ENCODE measurements at regions of chr14 and their contacts with region 1.

Region 1: DNA sequence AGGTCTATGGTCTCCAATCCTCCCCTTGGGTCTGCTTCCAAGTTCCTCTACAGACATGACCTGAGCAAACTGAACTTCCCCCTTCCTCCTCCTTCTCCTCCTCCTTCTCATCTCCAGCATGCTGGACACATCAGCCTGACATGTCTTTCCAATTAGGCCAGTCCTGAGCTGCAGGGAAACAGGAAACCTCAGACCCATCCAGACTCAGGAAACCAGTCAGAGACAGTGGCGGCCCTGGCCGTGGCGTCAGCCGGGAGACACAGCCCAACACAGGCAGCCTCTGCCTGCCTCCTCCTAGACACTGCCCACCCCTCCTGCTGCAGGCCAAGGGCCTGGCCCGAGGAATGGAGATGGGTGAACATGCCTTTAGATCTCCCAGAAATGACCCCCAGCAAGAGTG is 468.8 kb downstream of the BCL11B start:
- DNase-seq: no peak
- H3K4me3 ChIP-seq: no peak overlapping the region
- H3K27ac ChIP-seq: no peak overlapping the region
- H3K4me1 ChIP-seq: no peaks in the 10 kb centered on the region
- H3K27me3 ChIP-seq: no peaks in the 10 kb centered on the region
- CTCF ChIP-seq: no peak

Region 2: DNA sequence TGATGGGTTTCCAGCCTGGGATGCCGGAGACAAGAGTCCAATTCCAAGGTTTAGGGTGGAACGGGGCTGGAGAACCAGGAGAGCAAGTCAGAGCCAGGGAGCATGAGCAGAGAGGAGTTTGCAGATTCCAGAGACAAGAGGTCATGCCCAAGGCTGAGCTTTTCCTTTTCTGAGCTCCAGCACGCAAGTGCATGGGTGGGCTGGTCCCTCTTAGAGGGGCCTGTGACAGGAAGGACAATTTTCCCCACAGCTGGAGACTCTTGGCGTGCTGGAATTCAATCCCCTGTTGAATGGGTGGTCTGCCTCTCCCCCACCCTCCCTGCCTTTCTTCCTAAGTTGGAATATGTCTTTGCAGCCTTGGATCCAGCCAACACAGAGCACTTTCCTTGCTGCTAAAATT is 36.9 kb after region 1 on chr14:
- CTCF ChIA-PET with region 1: no interaction called
- dilution Hi-C with region 1: no loop called
- in situ Hi-C with region 1: no loop called
- intact Hi-C with region 1: no loop called
- DNase-seq: no peak
- H3K4me3 ChIP-seq: no peak overlapping the region
- H3K27ac ChIP-seq: no peak overlapping the region
- H3K4me1 ChIP-seq: no peaks in the 10 kb centered on the region
- H3K27me3 ChIP-seq: no peaks in the 10 kb centered on the region
- CTCF ChIP-seq: no peak

Region 3: GRCh38 chr14:98853063-98853729 is 50.0 kb after region 1 on chr14:
- CTCF ChIA-PET with region 1: no interaction called
- dilution Hi-C with region 1: loop called (anchors 5 kb)
- in situ Hi-C with region 1: no loop called
- intact Hi-C with region 1: no loop called
- DNase-seq: no peak
- H3K4me3 ChIP-seq: no peak overlapping the region
- H3K27ac ChIP-seq: no peak overlapping the region
- H3K4me1 ChIP-seq: no peaks in the 10 kb centered on the region
- H3K27me3 ChIP-seq: no peaks in the 10 kb centered on the region
- CTCF ChIP-seq: no peak

Region 4: DNA sequence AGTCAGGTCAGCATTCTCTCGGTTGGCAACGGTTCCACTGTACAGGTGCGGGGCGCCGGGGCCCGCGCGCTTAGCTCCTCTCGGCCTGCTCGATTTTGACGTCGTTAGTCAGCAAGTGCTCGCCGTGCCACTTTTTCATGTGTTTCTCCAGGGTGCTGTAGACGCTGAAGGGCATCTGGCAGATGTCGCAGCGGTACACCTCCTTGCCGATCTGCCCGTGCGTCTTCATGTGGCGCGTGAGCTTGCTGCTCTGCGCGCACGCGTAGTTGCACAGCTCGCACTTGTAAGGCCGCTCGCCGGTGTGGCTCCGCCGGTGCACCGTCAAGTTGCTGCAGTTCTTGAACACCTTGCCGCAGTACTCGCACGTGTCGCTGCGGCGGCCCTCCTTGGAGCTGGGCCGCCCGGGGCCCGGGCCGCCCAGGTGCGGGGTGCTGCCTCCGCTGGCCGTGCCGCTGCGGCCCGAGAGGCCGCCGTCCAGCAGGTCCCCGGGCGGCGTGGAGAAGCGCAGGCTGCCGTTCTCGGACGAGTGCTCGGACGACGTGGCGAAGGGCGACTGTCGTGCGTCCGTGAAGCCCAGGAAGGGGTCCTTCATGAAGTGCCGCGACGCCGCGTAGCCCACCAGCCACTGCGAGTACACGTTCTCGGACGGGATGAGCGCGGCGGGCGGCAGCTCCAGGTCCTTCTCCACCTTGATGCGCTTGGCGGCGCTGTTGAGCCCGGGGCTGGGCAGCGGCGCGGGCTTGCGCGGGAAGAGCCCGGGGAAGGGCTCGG is 371.1 kb after region 1 on chr14:
- CTCF ChIA-PET with region 1: no interaction called
- dilution Hi-C with region 1: no loop called
- in situ Hi-C with region 1: no loop called
- intact Hi-C with region 1: no loop called
- DNase-seq: no peak
- H3K4me3 ChIP-seq: no peak overlapping the region
- H3K27ac ChIP-seq: no peak overlapping the region
- H3K4me1 ChIP-seq: no peaks in the 10 kb centered on the region
- H3K27me3 ChIP-seq: no peaks in the 10 kb centered on the region
- CTCF ChIP-seq: no peak

Measured in mammary epithelial cell (primary cell).